Ovary (tissue), 10 donors: ENCODE measurements at regions of chr17 and their contacts with region 1.

Region 1: GRCh38 chr17:17805575-17805974 is 31.2 kb downstream of the SREBF1 start:
- DNase-seq: no peak
- H3K4me3 ChIP-seq: no peak overlapping the region
- H3K27ac ChIP-seq: no peak overlapping the region
- H3K4me1 ChIP-seq: peaks cover 3% of the 10 kb centered on the region
- H3K27me3 ChIP-seq: no peaks in the 10 kb centered on the region
- CTCF ChIP-seq: no peak
- EP300 ChIP-seq: no peak
- POLR2A ChIP-seq: no peak

Region 2: GRCh38 chr17:17757391-17757791 is 48.2 kb before region 1 on chr17:
- intact Hi-C with region 1: loop called in 1 of 4 experiments (anchors 2 kb)
- DNase-seq: no peak
- H3K4me3 ChIP-seq: no peak overlapping the region
- H3K27ac ChIP-seq: no peak overlapping the region
- H3K4me1 ChIP-seq: peaks cover 7% of the 10 kb centered on the region
- H3K27me3 ChIP-seq: no peaks in the 10 kb centered on the region
- CTCF ChIP-seq: no peak
- EP300 ChIP-seq: no peak
- POLR2A ChIP-seq: no peak